ENCODE measurements at regions of chr2 and their contacts with region 1.

Region 1: DNA sequence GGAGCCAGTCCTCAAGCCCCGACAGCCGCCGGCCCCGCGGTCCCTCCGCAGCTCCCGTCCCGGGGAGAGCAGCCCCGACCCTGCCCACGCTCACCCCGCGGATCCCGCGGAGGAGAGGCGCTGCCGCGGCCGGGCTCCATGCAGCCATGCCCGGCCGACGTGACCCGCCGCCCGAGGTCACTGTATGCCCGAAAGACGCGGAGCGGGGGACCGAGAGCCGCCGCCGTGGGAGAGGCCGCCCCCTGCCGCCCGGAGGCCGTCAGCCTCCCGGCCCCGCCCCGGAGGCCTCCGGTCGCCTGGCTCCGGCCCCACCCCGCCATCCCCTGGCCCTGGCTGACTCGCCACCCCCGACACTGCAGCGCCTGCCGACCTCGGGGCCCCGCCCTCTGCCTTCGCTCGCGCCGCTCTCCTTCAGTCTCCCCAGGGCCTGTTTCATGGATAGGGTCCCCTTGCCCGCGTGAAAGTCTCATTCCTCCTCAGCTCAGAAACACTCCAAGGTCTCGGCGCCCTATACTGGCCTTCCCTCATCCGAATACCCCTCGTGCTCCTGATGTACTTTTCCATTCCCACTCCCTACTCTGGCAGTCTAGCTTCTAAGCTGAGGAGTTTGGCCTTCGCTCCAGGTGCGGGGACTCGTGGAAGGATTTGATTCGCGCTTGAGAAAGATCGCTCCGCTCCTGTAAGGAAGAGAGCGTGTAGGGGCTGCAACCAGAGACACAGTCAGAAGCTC is at the start of gene BOLA3:
- DNase-seq: peak; percentile 68 to 87 (median 78)
- H3K4me3 ChIP-seq: peak within 1 kb of the TSS; percentile 93
- H3K27ac ChIP-seq: peak within 1 kb of the TSS in 1 of 2 donors; percentile 24
- H3K4me1 ChIP-seq: peaks cover 8% of the 10 kb centered on the region
- H3K27me3 ChIP-seq: no peaks in the 10 kb centered on the region
- CTCF ChIP-seq: peak; percentile 26 to 70 (median 62)
- EP300 ChIP-seq: no peak
- POLR2A ChIP-seq: no peak
- total RNA-seq, gene BOLA3: 8.2 to 30.1 (median 15.3) TPM

Region 2: DNA sequence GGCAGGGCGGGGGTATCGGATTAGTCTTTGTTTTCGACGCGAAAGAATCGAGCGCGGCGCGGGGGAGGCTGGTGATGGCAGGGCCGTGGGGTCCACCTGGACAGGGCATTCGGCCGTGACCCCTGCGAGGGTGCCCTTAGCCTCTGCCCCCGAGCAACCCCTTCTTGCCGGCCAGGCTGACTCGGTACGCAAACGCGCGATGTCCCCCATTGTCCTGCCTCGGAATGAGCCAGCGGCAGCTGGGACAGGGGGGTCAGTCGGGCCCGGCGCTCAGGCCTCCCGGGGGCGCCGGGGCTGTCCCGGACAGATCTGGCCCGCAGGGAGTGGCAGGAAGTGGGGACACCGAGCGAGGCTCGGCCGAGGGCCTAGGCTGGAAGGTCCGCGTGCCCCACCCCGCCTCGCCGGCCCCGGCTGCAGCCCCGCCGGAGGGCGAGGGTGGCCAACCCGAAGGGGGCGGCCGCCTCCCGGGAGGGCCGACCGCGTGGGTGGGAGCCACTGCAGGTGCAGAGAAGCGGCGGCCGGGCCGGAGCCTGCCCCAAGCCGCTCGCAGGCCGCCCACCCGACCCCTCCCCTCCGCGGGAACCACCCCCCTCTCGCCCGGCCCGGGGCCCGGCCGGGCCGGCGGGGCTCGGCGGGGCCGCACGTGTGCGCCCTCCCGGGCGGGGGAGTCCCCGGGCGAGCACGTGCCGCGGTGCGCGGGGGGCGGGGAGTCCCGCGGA is 163.5 kb before region 1 on chr2 and contains the start of gene TET3:
- intact Hi-C with region 1: no loop called
- DNase-seq: peak in 4 of 5 donors; percentile 49 to 70 (median 54)
- H3K4me3 ChIP-seq: peak within 1 kb of the TSS; percentile 51
- H3K27ac ChIP-seq: peak within 1 kb of the TSS in 1 of 2 donors; percentile 40
- H3K4me1 ChIP-seq: peaks cover 16% of the 10 kb centered on the region
- H3K27me3 ChIP-seq: no peaks in the 10 kb centered on the region
- CTCF ChIP-seq: no peak
- EP300 ChIP-seq: no peak
- POLR2A ChIP-seq: no peak
- total RNA-seq, gene TET3: 5.1 to 13.5 (median 7.9) TPM

Region 3: DNA sequence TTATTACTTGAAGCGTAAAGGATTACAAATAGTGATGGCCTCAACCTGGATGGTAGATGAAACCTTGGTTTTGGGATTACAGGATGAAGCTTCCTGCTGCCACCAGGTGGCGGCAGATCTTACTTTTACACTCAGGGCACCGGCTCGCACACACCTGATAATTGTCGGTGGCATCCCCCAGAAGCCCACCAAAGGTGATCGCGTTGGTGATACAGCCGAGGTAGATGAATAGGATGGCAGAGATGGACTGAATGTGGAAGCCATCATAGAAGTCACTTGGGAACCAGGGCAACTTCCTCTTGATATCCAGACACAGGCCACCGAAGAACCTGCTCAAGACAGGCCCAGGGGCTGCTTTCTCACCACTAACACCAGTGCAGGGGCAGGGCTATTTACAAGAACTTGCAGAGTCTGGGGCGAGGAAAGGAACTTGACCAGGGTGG is 102.3 kb after region 1 on chr2:
- intact Hi-C with region 1: loop called in 1 of 4 experiments (anchors 10 kb)
- DNase-seq: peak; percentile 30 to 65 (median 49)
- H3K4me3 ChIP-seq: no peak overlapping the region
- H3K27ac ChIP-seq: no peak overlapping the region
- H3K4me1 ChIP-seq: no peaks in the 10 kb centered on the region
- H3K27me3 ChIP-seq: no peaks in the 10 kb centered on the region
- CTCF ChIP-seq: peak; percentile 46 to 52 (median 47)
- EP300 ChIP-seq: no peak
- POLR2A ChIP-seq: no peak

Region 4: GRCh38 chr2:74278176-74278575 is 130.3 kb after region 1 on chr2:
- intact Hi-C with region 1: no loop called
- DNase-seq: no peak
- H3K4me3 ChIP-seq: no peak overlapping the region
- H3K27ac ChIP-seq: no peak overlapping the region
- H3K4me1 ChIP-seq: no peaks in the 10 kb centered on the region
- H3K27me3 ChIP-seq: no peaks in the 10 kb centered on the region
- CTCF ChIP-seq: no peak
- EP300 ChIP-seq: no peak
- POLR2A ChIP-seq: no peak

Region 5: GRCh38 chr2:74343316-74343715 is 195.4 kb after region 1 on chr2 and contains the start of gene SLC4A5:
- intact Hi-C with region 1: no loop called
- DNase-seq: no peak
- H3K4me3 ChIP-seq: no peak within 1 kb of the TSS
- H3K27ac ChIP-seq: no peak within 1 kb of the TSS
- H3K4me1 ChIP-seq: no peaks in the 10 kb centered on the region
- H3K27me3 ChIP-seq: no peaks in the 10 kb centered on the region
- CTCF ChIP-seq: no peak
- EP300 ChIP-seq: no peak
- POLR2A ChIP-seq: no peak
- total RNA-seq, gene SLC4A5: 1.5 to 6.3 (median 2.7) TPM